ENCODE measurements at regions of chr9 and their contacts with region 1.

Region 1: GRCh38 chr9:14768405-14769229 is 46.1 kb upstream of the CER1 start:
- DNase-seq: peak; percentile 58
- ATAC-seq: peak; percentile 36
- H3K4me3 ChIP-seq: no peak overlapping the region
- H3K4me3 Mint-ChIP-seq: no peak overlapping the region
- H3K27ac ChIP-seq: no peak overlapping the region
- H3K27ac Mint-ChIP-seq: no peak overlapping the region
- H3K4me1 ChIP-seq: peaks cover 0 to 3% of the 10 kb centered on the region in 2 donors
- H3K4me1 Mint-ChIP-seq: peaks cover 4% of the 10 kb centered on the region
- H3K27me3 ChIP-seq: no peaks in the 10 kb centered on the region
- H3K27me3 Mint-ChIP-seq: peaks cover 16% of the 10 kb centered on the region
- CTCF ChIP-seq: peak; percentile 80

Region 2: GRCh38 chr9:13351778-13352386 is 1416.7 kb before region 1 on chr9:
- CTCF ChIA-PET with region 1: no interaction called
- POLR2A ChIA-PET with region 1: no interaction called
- intact Hi-C with region 1: loop called (anchors 5 kb)
- DNase-seq: peak; percentile 3
- ATAC-seq: no peak
- H3K4me3 ChIP-seq: no peak overlapping the region
- H3K4me3 Mint-ChIP-seq: no peak overlapping the region
- H3K27ac ChIP-seq: no peak overlapping the region
- H3K27ac Mint-ChIP-seq: no peak overlapping the region
- H3K4me1 ChIP-seq: no peaks in the 10 kb centered on the region
- H3K4me1 Mint-ChIP-seq: no peaks in the 10 kb centered on the region
- H3K27me3 ChIP-seq: no peaks in the 10 kb centered on the region
- H3K27me3 Mint-ChIP-seq: no peaks in the 10 kb centered on the region
- CTCF ChIP-seq: peak; percentile 46

Region 3: DNA sequence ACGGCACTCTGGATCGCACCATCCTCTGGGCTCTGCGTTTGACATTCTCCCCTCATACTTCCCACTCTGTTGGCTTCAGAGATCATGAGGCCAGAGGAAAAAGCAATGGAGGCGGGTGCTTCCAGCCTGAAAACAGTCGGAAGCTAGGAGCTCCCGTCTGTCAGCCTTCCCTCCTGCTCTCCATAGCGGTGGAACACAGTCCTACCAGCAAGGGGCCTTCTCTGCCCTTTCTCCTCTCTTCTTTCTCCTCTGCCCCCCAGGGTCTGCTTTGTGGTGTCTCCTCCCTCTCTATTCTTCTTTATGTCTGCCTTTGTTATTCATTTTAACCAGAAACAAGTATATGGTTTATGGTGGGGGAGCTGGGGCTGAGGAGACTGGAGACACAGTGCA is 302.2 kb before region 1 on chr9:
- CTCF ChIA-PET with region 1: interaction called, 6 read pairs
- POLR2A ChIA-PET with region 1: no interaction called
- intact Hi-C with region 1: loop called (anchors 5 kb)
- DNase-seq: no peak
- ATAC-seq: no peak
- H3K4me3 ChIP-seq: no peak overlapping the region
- H3K4me3 Mint-ChIP-seq: no peak overlapping the region
- H3K27ac ChIP-seq: no peak overlapping the region
- H3K27ac Mint-ChIP-seq: no peak overlapping the region
- H3K4me1 ChIP-seq: no peaks in the 10 kb centered on the region
- H3K4me1 Mint-ChIP-seq: no peaks in the 10 kb centered on the region
- H3K27me3 ChIP-seq: no peaks in the 10 kb centered on the region
- H3K27me3 Mint-ChIP-seq: peaks cover 14% of the 10 kb centered on the region
- CTCF ChIP-seq: no peak

Region 4: GRCh38 chr9:14627513-14627912 is 141.1 kb before region 1 on chr9:
- CTCF ChIA-PET with region 1: interaction called, 12 read pairs
- POLR2A ChIA-PET with region 1: no interaction called
- intact Hi-C with region 1: no loop called
- DNase-seq: no peak
- ATAC-seq: no peak
- H3K4me3 ChIP-seq: no peak overlapping the region
- H3K4me3 Mint-ChIP-seq: no peak overlapping the region
- H3K27ac ChIP-seq: no peak overlapping the region
- H3K27ac Mint-ChIP-seq: no peak overlapping the region
- H3K4me1 ChIP-seq: no peaks in the 10 kb centered on the region
- H3K4me1 Mint-ChIP-seq: no peaks in the 10 kb centered on the region
- H3K27me3 ChIP-seq: no peaks in the 10 kb centered on the region
- H3K27me3 Mint-ChIP-seq: no peaks in the 10 kb centered on the region
- CTCF ChIP-seq: no peak

Region 5: GRCh38 chr9:14756291-14756690 is 12.3 kb before region 1 on chr9:
- CTCF ChIA-PET with region 1: interaction called, 21 read pairs
- POLR2A ChIA-PET with region 1: no interaction called
- intact Hi-C with region 1: no loop called
- DNase-seq: no peak
- ATAC-seq: no peak
- H3K4me3 ChIP-seq: no peak overlapping the region
- H3K4me3 Mint-ChIP-seq: no peak overlapping the region
- H3K27ac ChIP-seq: no peak overlapping the region
- H3K27ac Mint-ChIP-seq: no peak overlapping the region
- H3K4me1 ChIP-seq: no peaks in the 10 kb centered on the region
- H3K4me1 Mint-ChIP-seq: peaks cover 4% of the 10 kb centered on the region
- H3K27me3 ChIP-seq: no peaks in the 10 kb centered on the region
- H3K27me3 Mint-ChIP-seq: peaks cover 15% of the 10 kb centered on the region
- CTCF ChIP-seq: no peak

Measured in B cell (primary cell).